GM10248 (cell line): ENCODE measurements at regions of chr17 and their contacts with region 1.

Region 1: DNA sequence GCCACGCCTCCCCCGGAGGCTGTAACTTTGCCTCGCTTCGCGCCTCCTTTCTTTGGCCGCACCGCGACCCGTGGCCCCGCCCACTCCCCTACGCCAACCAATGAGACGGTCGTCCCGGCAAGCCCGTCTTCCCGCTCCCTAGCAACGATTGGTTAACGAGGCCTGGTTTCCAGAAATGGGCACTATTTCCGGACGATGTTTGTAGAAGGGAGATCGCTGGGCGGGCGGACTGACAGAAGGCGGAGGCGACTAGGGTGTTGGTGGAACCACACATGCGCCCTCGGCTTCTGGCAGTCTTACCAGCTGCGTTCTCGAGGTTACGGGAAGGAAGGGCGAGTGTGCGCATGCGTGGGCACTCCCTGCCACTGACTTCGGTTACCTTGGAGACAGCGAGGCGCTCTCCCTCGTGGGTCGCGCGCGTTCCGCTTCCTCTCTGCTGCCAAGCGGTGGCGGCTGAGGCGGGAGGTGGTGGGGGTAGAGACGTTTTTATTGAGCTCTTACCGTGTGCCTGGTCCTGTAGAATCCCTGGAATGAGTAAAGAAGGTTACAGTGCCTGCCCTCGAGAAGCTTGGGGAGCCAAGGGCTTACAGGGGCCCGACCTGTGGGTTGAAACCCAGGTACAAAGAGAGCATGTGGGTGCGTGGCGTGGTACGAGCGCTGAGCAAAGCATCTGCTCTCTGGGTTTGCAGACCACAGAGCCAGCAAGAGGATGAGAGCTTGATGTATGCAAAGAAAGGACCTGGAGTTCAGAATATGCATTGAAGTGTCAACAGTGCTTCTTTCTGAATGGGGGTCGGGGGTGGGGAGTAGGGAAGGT is 500 bp upstream of the MAP3K14 start:
- DNase-seq: peak; percentile 98
- CTCF ChIP-seq: no peak

Region 2: DNA sequence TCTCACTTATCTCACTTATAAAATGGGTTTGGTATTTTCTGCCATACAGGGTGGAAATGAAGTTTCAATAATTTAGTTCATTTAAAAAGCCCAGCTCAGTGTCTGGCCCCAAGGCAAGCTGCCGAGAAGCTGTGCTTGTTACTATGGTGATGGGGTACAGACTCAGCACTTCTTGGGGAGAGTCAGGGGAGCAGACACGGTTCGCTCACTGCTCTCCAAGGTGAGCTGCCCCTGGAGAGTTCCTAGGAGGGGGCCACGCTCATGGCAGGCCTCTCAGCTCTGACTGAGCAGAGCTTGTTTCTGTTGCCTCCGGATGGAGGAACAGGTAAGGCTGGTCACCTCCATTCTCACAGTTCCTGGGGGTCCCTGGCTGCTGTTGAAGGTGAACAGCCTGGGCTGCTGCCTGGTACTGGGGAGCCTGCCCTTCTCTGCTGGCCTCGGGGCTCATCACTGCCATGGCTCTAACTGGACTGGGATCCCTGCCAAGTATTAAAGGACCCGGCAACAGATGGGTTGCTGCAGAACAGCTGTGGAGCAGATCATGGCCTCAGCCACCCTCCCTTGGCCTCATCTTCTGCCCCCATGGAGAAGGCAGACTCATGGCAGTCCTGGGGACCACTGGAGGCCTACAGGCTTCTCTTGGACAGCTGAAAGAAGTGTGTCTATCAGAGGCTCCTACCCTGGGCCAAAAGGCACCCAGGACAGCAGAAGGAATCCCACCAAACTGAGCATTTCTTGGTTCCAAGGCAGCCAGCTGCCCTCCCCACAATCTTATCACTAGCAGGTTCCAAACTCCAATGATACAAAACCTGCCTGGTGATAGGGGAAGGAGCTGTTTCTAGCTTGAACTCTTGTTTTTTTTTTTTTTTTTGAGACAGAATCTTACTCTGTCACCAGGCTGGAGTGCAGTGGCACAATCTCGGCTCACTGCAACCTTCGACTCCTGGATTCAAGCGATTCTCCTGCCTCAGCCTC is 29.5 kb before region 1 on chr17:
- CTCF ChIA-PET with region 1: interaction called, 33 read pairs
- POLR2A ChIA-PET with region 1: interaction called, 3 read pairs
- DNase-seq: no peak
- CTCF ChIP-seq: no peak

Region 3: DNA sequence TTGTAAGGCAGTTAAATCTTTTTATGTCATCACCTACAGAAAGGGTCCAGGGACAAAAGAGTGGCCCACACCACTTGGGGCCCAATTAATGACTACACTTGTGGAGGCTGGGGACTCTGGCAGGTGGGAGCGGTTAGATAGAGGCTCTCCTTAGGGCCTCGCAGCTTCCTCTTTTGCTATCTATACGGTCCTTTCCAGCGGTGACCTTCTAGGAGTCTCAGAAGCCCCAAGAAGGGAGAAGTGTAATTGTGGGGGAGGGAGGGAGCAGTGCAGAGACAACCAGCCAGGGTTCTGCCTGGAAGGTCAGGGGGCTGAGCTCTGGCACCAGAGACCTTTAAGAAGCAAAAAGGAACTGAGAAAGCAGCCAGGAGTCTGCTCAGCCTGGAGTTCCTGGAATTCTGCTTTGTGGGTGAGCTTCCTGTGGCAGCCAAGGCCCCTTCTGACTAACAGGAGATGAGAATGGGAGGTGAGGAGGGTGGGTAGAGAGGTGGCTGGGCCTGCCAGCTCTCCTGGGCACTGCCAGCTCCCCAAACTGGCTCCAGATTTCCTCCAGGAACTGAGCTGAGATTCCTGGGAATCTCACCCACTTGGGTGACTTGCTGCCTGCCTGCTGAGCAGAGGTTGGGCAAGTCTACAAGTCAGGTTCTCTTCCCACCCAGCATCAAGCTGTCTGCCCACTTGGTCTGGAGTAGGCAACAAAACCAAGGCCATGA is 15.8 kb after region 1 on chr17:
- CTCF ChIA-PET with region 1: interaction called, 12 read pairs
- POLR2A ChIA-PET with region 1: interaction called, 4 read pairs
- DNase-seq: peak; percentile 72
- CTCF ChIP-seq: no peak